Activated CD8-positive, alpha-beta T cell treated with anti-CD3 and anti-CD28 coated beads for 36 hours (primary cell): ENCODE measurements at regions of chr1 and their contacts with region 1.

Region 1: GRCh38 chr1:160575112-160575664 is 4.1 kb downstream of the CD84 start:
- DNase-seq: peak; percentile 31
- ATAC-seq: peak; percentile 59
- H3K4me3 Mint-ChIP-seq: peak overlapping the region; percentile 85
- H3K27ac Mint-ChIP-seq: peak overlapping the region; percentile 94
- H3K4me1 Mint-ChIP-seq: peaks cover 85% of the 10 kb centered on the region
- H3K27me3 Mint-ChIP-seq: no peaks in the 10 kb centered on the region
- CTCF ChIP-seq: no peak

Region 2: GRCh38 chr1:160558660-160559380 is 16.4 kb before region 1 on chr1:
- CTCF ChIA-PET with region 1: interaction called, 19 read pairs
- POLR2A ChIA-PET with region 1: interaction called, 4 read pairs
- intact Hi-C with region 1: no loop called
- DNase-seq: no peak
- ATAC-seq: peak; percentile 31
- H3K4me3 Mint-ChIP-seq: peak overlapping the region; percentile 62
- H3K27ac Mint-ChIP-seq: peak overlapping the region; percentile 95
- H3K4me1 Mint-ChIP-seq: peaks cover 68% of the 10 kb centered on the region
- H3K27me3 Mint-ChIP-seq: no peaks in the 10 kb centered on the region
- CTCF ChIP-seq: no peak